H1 (cell line): ENCODE measurements at regions of chr20 and their contacts with region 1.

Region 1: GRCh38 chr20:38363004-38363747 is 16.9 kb downstream of the LBP start:
- DNase-seq: no peak
- H3K4me3 ChIP-seq: no peak overlapping the region
- H3K27ac ChIP-seq: no peak overlapping the region
- H3K4me1 ChIP-seq: no peaks in the 10 kb centered on the region
- H3K27me3 ChIP-seq: no peaks in the 10 kb centered on the region
- CTCF ChIP-seq: no peak
- EP300 ChIP-seq: no peak
- POLR2A ChIP-seq: no peak
- RAD21 ChIP-seq: no peak

Region 2: GRCh38 chr20:37710994-37711393 is 652.2 kb before region 1 on chr20:
- CTCF ChIA-PET with region 1: no interaction called
- POLR2A ChIA-PET with region 1: no interaction called
- DNase-seq: no peak
- H3K4me3 ChIP-seq: no peak overlapping the region
- H3K27ac ChIP-seq: no peak overlapping the region
- H3K4me1 ChIP-seq: 0 out of 7 replicates have a peak, but pooled peaks cover 0 to 5% (median 0%) of the 10 kb centered on the region in 4 experiments
- H3K27me3 ChIP-seq: no peaks in the 10 kb centered on the region
- CTCF ChIP-seq: no peak
- EP300 ChIP-seq: no peak
- POLR2A ChIP-seq: no peak
- RAD21 ChIP-seq: no peak

Region 3: GRCh38 chr20:38210741-38211140 is 152.4 kb before region 1 on chr20:
- CTCF ChIA-PET with region 1: no interaction called
- POLR2A ChIA-PET with region 1: no interaction called
- DNase-seq: no peak
- H3K4me3 ChIP-seq: no peak overlapping the region
- H3K27ac ChIP-seq: no peak overlapping the region
- H3K4me1 ChIP-seq: no peaks in the 10 kb centered on the region
- H3K27me3 ChIP-seq: no peaks in the 10 kb centered on the region
- CTCF ChIP-seq: no peak
- EP300 ChIP-seq: no peak
- POLR2A ChIP-seq: no peak
- RAD21 ChIP-seq: no peak

Region 4: DNA sequence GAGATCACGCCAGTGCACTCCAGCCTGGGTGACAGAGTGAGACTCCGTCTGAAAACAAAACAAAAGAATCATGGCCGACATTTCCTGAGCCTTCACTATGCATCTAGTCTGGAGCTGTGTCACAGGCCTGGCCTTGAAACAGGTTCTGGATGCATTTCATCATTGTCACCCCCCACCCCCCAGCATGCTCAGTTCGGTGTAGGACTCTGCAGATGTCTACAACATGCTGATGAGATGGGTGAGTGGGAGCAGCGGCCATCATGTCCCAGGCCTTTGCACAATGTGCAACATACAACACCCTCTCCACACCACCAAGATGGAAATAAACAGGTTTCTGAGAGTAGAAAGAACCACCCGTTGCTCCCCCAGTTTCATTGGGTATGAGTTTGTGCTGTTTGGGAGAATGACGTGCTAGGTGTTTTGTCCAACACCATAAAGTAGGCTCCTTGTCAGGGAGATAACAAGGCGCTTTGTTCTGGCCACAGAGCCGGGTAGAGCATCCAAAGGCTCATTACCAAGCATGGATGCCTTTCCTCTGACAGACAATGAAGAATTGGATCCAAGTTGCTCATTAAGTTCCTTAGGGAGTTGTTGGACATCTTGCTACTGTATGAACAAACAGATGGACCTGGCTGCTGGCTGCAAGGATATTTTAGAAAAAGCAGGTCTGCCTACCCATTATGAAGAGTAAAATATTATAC is 49.9 kb after region 1 on chr20:
- CTCF ChIA-PET with region 1: interaction called, 18 read pairs
- POLR2A ChIA-PET with region 1: interaction called, 3 read pairs
- DNase-seq: no peak
- H3K4me3 ChIP-seq: no peak overlapping the region
- H3K27ac ChIP-seq: no peak overlapping the region
- H3K4me1 ChIP-seq: peaks cover 0 to 5% (median 2%) of the 10 kb centered on the region in 4 experiments; a peak in 5 of 7 replicates
- H3K27me3 ChIP-seq: no peaks in the 10 kb centered on the region
- CTCF ChIP-seq: no peak
- EP300 ChIP-seq: no peak
- POLR2A ChIP-seq: no peak
- RAD21 ChIP-seq: no peak